Activated B cell treated with CpG ODN at 0.5 μM for 24 hours (primary cell): ENCODE measurements at regions of chr6 and their contacts with region 1.

Region 1: DNA sequence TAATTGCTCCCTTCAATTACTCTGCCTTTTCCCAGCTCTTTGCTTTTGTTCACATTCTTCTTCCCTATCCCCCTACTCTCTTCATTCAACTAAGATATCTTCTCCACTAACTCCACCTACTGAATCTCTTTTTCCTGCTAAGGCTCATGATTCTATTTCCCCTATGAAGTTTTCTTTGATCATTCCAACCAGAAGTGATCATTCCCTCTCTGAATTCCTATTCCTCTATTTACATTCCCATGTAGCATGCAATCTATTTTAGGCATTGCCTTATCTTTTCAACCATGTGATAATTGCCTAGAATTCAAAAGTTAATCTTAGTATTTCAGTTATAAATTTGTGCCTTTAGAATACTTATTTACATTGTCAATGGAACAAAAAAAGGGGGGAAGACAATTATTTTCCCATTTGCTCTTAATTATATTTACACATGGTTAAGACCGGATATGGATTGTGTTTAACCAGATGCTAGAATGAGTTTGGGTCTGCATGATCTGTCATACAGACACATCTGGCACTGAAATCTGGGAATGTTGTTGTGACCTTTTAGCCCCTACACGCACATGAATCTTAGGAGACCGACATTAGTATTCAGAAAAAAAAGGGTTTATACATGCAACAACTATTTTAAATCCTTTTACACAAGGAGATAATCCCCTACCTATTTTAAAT is 20.8 kb downstream of the MOXD1 start:
- DNase-seq: no peak
- ATAC-seq: no peak
- H3K4me3 Mint-ChIP-seq: no peak overlapping the region
- H3K27ac Mint-ChIP-seq: no peak overlapping the region
- H3K4me1 Mint-ChIP-seq: peaks cover 23% of the 10 kb centered on the region
- H3K27me3 Mint-ChIP-seq: no peaks in the 10 kb centered on the region
- CTCF ChIP-seq: no peak

Region 2: DNA sequence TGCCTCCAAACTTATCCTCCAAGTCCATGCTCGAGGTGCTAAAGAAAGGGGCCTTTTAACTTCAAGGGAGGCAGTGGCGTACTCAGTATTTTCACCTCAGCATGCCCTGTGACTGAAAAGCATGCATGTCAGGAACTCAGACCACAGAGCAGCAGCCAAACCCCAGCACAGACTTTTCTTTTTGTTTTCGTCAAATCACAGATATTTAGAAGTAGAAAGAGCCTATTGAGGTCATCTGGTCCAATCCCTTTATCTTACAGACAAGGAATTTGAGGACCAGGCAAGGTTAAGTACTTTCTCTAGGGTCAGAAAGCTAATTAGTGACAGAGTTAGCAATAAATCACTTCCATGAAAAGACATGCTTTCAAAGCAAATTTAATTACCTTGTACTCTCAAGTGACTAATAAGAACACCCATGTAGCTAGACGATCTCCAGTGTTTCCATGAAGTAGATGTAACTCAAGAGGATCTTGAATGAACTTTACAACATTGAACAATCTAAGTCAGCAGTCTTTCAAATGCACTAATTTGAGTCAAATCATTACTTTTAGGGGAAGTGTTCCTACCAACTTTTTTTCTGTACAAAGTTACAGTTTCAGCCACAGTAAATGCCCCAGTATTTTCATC is 15.1 kb before region 1 on chr6:
- CTCF ChIA-PET with region 1: interaction called, 4 read pairs
- POLR2A ChIA-PET with region 1: interaction called, 7 read pairs
- intact Hi-C with region 1: loop called (anchors 1 kb)
- DNase-seq: no peak
- ATAC-seq: peak; percentile 83
- H3K4me3 Mint-ChIP-seq: peak overlapping the region; percentile 44
- H3K27ac Mint-ChIP-seq: peak overlapping the region; percentile 82
- H3K4me1 Mint-ChIP-seq: peaks cover 61% of the 10 kb centered on the region
- H3K27me3 Mint-ChIP-seq: no peaks in the 10 kb centered on the region
- CTCF ChIP-seq: no peak

Region 3: GRCh38 chr6:132400641-132401119 is 20.2 kb after region 1 on chr6:
- CTCF ChIA-PET with region 1: no interaction called
- POLR2A ChIA-PET with region 1: no interaction called
- intact Hi-C with region 1: no loop called
- DNase-seq: peak; percentile 37
- ATAC-seq: no peak
- H3K4me3 Mint-ChIP-seq: peak overlapping the region; percentile 88
- H3K27ac Mint-ChIP-seq: peak overlapping the region; percentile 42
- H3K4me1 Mint-ChIP-seq: peaks cover 30% of the 10 kb centered on the region
- H3K27me3 Mint-ChIP-seq: peaks cover 7% of the 10 kb centered on the region
- CTCF ChIP-seq: no peak